Posterior cingulate gyrus (tissue), 11 donors: ENCODE measurements at regions of chr2 and their contacts with region 1.

Region 1: DNA sequence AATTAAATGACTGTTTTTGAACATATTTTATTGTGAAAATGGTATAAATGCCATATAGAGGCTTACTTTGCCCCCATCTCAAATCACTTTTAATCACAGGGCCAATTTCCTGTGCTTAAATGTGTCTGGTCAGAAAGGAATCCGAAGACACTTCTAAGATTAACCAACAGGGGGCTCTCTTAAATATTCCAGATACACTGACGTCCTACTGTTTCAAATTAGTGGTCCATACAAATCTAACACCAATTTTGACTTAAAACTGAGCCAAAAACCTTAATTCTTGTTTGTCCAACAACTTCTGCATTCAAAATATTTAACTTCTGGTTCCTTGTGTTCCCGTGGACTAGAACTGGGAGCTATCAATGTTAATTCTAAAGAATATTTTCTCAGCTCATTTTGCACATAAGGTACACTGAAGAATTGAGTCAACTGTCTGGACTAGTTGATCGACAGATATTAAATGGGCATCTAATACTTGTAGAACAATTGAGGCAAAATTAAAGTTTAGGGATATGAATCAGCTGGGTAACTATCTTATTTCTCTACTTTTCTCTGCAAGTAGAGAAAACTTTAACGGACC is 557.5 kb downstream of the ARHGAP15 start:
- DNase-seq: no peak

Region 2: GRCh38 chr2:143530753-143531152 is 155.9 kb before region 1 on chr2:
- intact Hi-C with region 1: no loop called
- DNase-seq: no peak

Region 3: GRCh38 chr2:143582046-143582747 is 104.5 kb before region 1 on chr2:
- intact Hi-C with region 1: loop called (anchors 5 kb)
- DNase-seq: peak in 1 of 10 donors; percentile 28

Region 4: DNA sequence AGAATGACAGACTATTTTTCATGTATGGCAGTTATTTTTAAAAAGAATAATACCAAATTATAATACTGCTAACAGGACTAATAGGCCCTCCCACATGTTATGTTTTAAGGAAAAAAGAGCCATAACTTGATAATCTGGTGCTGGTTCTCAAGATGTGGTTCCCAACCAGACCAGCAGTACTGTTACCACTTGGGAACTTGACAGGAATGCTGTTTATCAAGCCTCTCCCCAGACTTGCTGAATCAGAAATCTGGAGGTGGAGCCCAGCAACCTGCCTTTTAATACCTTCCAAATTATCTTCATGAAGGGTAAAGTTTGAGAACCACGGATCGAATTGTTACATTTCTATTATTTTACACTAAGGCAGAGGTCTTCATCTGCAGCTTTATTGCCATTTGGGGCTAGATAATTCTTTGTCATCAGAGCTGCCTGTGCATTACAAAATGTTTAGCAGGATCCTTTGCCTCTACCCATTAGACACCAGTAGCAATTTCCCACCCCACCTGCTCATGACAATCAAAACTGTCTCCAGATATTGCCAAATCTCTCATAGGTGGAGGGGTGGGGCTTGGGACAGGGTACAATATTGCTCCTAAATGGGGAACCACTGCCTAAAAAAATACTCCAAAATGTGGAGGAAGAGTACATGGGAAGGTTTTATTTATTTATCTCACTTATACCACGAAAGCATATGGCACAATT is 72.1 kb after region 1 on chr2:
- intact Hi-C with region 1: no loop called
- DNase-seq: no peak